ENCODE measurements at regions of chr1 and their contacts with region 1.

Region 1: DNA sequence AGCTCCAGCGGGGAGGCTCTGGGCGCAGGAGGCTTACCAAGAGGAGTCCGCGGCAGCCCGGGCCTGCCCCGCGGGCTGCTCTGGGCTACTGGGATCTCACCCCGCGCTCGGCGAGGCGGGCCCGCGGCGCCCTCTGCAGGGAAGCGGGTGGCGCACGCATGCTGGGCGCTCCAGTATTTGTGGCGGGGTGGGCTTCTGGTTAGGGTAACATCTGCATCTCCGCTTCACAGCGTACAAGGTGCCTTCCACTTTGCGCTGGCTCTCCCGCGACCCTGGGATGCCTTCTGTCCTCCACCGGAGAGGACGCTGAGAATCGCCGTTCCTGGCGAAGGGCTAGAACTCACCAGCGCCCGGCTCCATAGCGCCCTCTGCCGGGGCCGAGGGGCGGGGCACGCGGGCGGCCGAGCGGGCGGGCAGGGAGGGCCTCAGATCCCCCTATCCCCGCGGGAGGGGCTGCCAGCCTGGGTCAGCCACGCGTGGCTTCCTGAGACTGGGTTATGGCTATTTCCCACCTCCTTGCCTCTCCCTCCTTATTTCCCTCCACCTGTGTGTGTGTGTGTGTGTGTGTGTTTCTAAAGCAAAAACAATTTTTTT is 46.6 kb upstream of the CTBS start:
- DNase-seq: peak; percentile 94
- H3K4me3 ChIP-seq: peak overlapping the region; percentile 59 to 74
- H3K27ac ChIP-seq: peak overlapping the region; percentile 83 to 94
- H3K4me1 ChIP-seq: peaks cover 14 to 15% of the 10 kb centered on the region in 2 experiments; a peak in 2 of 4 replicates
- H3K27me3 ChIP-seq: no peaks in the 10 kb centered on the region
- CTCF ChIP-seq: peak; percentile 95
- EP300 ChIP-seq: no peak
- RAD21 ChIP-seq: peak; percentile 57

Region 2: DNA sequence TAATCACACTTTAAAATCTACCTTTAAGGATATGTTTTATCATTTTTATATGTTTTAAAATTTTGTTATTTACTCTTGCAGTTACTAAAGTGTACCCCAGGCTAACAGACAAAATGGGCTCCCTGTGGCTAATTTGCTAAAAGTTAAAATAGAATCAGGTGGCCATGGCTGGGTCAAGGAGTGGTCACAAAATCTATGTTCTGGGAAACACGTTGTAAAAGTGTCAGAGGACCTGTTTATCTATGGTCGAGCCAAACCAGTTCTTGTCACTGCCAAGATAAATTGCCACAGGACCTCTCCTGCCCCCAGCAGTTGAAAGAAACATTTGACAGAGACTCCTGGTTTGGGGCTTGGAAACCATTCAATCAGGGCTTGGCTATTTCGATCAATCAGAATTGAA is 600.7 kb before region 1 on chr1:
- CTCF ChIA-PET with region 1: no interaction called
- POLR2A ChIA-PET with region 1: no interaction called
- DNase-seq: no peak
- H3K4me3 ChIP-seq: no peak overlapping the region
- H3K27ac ChIP-seq: no peak overlapping the region
- H3K4me1 ChIP-seq: no peaks in the 10 kb centered on the region; a peak in 1 of 4 replicates
- H3K27me3 ChIP-seq: no peaks in the 10 kb centered on the region
- CTCF ChIP-seq: no peak
- EP300 ChIP-seq: no peak
- RAD21 ChIP-seq: no peak

Region 3: GRCh38 chr1:84506002-84506728 is 114.7 kb before region 1 on chr1 and contains the starts of genes GNG5 and SPATA1:
- CTCF ChIA-PET with region 1: interaction called, 28 read pairs
- POLR2A ChIA-PET with region 1: interaction called, 7 read pairs
- DNase-seq: peak; percentile 98
- H3K4me3 ChIP-seq: peak within 1 kb of the TSS; percentile 71 to 81
- H3K27ac ChIP-seq: peak within 1 kb of the TSS; percentile 94 to 99
- H3K4me1 ChIP-seq: peaks cover 8 to 19% of the 10 kb centered on the region in 2 experiments; a peak in 3 of 4 replicates
- H3K27me3 ChIP-seq: no peaks in the 10 kb centered on the region
- CTCF ChIP-seq: no peak
- EP300 ChIP-seq: no peak
- RAD21 ChIP-seq: no peak
- polyA plus RNA-seq, gene GNG5: 67.0 and 104 TPM in 2 replicates
- polyA plus RNA-seq, gene SPATA1: 1.2 and 1.6 TPM in 2 replicates

Region 4: DNA sequence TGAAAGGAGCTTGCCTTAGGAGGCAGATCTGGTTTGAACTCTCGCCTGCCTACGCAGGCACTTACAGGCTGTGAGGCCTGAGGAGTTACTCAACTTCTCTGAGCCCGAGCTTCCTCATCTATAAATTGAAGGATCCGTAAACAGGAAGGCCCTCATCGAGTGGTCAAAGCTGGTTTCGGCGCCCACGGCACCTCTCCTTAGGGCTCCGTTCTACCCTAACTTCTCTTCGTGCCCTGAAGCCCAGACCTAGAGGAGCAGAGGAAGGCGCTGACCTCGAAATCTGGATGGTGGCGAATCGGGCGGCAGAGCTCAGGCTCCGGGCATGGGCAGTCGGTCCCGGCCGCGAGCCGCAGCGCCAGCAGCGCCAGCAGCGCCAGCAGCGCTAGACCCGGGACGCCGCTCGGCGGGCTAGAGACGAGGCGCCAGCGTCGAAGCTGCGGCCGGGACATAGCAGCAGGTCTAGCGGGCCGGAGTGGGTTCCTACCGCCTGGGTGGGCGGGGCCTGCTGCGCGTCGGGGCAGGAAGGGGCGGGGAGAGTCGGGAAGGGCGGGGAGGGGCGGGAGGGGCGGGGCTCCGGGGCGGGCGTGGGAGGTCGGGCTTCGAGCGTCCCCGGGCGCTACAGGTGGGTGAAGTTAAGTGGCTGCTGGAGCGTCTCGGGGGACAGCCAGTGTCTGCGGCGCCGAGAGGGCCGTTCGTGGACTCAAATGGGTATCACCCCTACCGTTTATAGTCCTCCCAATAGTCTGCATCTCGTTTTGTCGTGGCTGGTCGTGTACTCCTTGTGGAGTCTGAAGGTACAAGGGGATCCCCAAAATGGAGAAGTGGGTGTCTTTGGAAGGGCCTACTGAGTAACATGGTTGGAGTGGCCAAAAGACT is 46.6 kb before region 1 on chr1 and contains the start of gene CTBS:
- CTCF ChIA-PET with region 1: interaction called, 12 read pairs
- POLR2A ChIA-PET with region 1: interaction called, 4 read pairs
- DNase-seq: peak; percentile 99
- H3K4me3 ChIP-seq: peak within 1 kb of the TSS; percentile 78 to 79
- H3K27ac ChIP-seq: peak within 1 kb of the TSS; percentile 93
- H3K4me1 ChIP-seq: peaks cover 6 to 14% of the 10 kb centered on the region in 2 experiments; a peak in 3 of 4 replicates
- H3K27me3 ChIP-seq: no peaks in the 10 kb centered on the region
- CTCF ChIP-seq: no peak
- EP300 ChIP-seq: no peak
- RAD21 ChIP-seq: no peak
- polyA plus RNA-seq, gene CTBS: 16.6 and 23.4 TPM in 2 replicates